Activated CD4-positive, alpha-beta T cell treated with anti-CD3 and anti-CD28 coated beads for 36 hours (primary cell): ENCODE measurements at regions of chr9 and their contacts with region 1.

Region 1: GRCh38 chr9:128455849-128456612 is at the start of gene ODF2:
- DNase-seq: peak; percentile 99
- ATAC-seq: peak; percentile 95
- H3K4me3 Mint-ChIP-seq: peak within 1 kb of the TSS; percentile 81
- H3K27ac Mint-ChIP-seq: peak within 1 kb of the TSS; percentile 82
- H3K4me1 Mint-ChIP-seq: peaks cover 16% of the 10 kb centered on the region
- H3K27me3 Mint-ChIP-seq: no peaks in the 10 kb centered on the region
- total RNA-seq, gene ODF2: 73.5 to 86.4 TPM

Region 2: DNA sequence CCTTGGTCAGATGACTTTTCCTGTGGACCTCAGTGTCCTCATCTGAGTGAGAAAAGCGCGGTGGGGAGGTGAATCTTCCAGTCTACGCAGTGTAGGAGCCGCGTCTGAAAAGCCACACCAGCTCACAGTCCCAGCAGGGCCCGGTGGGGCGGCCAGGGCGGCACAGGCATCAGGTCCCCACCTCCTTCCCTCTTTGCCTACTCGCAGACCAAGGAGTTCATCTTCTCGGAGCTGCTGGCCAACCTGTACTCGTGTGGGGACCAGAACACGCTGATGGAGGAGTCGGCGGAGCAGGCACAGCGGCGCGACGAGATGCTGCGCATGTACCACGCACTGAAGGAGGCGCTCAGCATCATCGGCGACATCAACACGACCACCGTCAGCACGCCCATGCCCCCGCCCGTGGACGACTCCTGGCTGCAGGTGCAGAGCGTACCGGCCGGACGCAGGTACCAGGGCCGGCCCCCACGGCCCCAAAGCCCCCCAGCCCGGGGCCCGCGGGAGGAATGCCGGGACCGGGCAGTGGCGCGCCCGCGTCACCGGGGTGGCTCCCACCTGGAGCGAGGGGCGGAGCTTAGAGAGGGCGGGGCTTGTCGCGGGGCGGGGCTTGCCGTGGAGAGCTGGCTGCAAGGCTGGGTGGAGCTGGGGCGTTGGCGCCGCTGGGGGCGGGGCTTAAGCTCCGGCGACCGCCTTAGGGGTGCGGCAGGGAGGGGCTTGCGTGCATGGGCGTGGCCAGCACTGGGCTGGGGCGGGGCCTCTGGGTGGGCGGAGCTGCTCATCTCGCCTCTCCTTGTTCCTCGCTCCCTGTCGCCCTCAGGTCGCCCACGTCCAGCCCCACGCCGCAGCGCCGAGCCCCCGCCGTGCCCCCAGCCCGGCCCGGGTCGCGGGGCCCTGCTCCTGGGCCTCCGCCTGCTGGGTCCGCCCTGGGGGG is 205.9 kb before region 1 on chr9:
- CTCF ChIA-PET with region 1: no interaction called
- POLR2A ChIA-PET with region 1: no interaction called
- intact Hi-C with region 1: loop called in 1 of 2 experiments (anchors 1 kb)
- DNase-seq: peak; percentile 99
- ATAC-seq: peak; percentile 98
- H3K4me3 Mint-ChIP-seq: peak overlapping the region; percentile 78
- H3K27ac Mint-ChIP-seq: peak overlapping the region; percentile 42
- H3K4me1 Mint-ChIP-seq: peaks cover 7% of the 10 kb centered on the region
- H3K27me3 Mint-ChIP-seq: peaks cover 10% of the 10 kb centered on the region

Region 3: GRCh38 chr9:128370826-128371621 is 85.0 kb before region 1 on chr9 and contains the start of gene URM1:
- CTCF ChIA-PET with region 1: no interaction called
- POLR2A ChIA-PET with region 1: no interaction called
- intact Hi-C with region 1: loop called in 1 of 2 experiments (anchors 1 kb)
- DNase-seq: peak; percentile 98
- ATAC-seq: peak; percentile 98
- H3K4me3 Mint-ChIP-seq: peak within 1 kb of the TSS; percentile 87
- H3K27ac Mint-ChIP-seq: peak within 1 kb of the TSS; percentile 89
- H3K4me1 Mint-ChIP-seq: peaks cover 27% of the 10 kb centered on the region
- H3K27me3 Mint-ChIP-seq: no peaks in the 10 kb centered on the region
- total RNA-seq, gene URM1: 39.9 to 56.1 TPM

Region 4: GRCh38 chr9:128470560-128470959 is 14.5 kb after region 1 on chr9:
- CTCF ChIA-PET with region 1: no interaction called
- POLR2A ChIA-PET with region 1: no interaction called
- intact Hi-C with region 1: no loop called
- DNase-seq: peak; percentile 24
- ATAC-seq: peak; percentile 30
- H3K4me3 Mint-ChIP-seq: no peak overlapping the region
- H3K27ac Mint-ChIP-seq: peak overlapping the region; percentile 32
- H3K4me1 Mint-ChIP-seq: peaks cover 2% of the 10 kb centered on the region
- H3K27me3 Mint-ChIP-seq: no peaks in the 10 kb centered on the region

Region 5: GRCh38 chr9:128688512-128689292 is 232.7 kb after region 1 on chr9 and contains the start of gene SET:
- CTCF ChIA-PET with region 1: no interaction called
- POLR2A ChIA-PET with region 1: interaction called, 3 read pairs
- intact Hi-C with region 1: loop called in 1 of 2 experiments (anchors 1 kb)
- DNase-seq: peak; percentile 96
- ATAC-seq: peak; percentile 71
- H3K4me3 Mint-ChIP-seq: peak within 1 kb of the TSS; percentile 99
- H3K27ac Mint-ChIP-seq: peak within 1 kb of the TSS; percentile 94
- H3K4me1 Mint-ChIP-seq: peaks cover 61% of the 10 kb centered on the region
- H3K27me3 Mint-ChIP-seq: no peaks in the 10 kb centered on the region
- total RNA-seq, gene SET: 673 to 682 TPM

Region 6: DNA sequence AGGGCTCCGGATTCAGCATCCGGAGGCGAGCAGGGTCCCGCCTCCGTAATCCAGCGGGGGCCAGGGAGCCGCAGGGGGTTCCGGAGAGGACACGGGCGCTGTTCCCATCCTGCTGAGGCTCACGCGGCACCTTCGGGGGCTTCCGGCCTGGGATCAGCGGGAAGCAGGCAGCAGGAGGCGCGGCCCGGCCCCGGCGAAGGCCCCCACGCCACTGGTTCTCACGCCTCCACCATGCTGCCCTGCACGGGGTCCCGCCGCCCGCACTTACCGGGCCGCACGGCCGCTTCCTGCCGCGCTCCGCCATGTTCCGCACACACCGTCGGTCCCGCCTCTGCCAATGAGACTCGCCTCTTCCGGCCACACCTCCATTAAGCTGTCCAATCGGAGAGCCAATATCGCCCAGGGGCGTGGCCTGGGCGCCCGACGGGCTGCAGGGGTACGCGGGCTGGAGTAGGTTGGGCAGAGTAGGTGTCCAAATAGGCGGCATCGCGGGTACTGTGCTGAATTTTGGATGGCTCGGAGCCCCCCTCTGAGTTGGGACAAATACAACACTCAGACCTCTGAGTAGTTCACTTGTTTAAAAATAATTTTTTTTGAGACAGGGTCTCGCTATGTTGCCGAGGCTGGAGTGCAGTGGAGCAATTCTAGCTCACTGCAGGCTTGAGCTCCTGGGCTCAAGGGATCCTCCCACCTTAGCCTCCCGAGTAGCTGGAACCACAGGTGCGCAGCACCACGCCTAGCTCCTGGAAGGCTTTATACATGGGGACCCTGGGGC is 373.6 kb after region 1 on chr9 and contains the start of gene SPOUT1:
- CTCF ChIA-PET with region 1: no interaction called
- POLR2A ChIA-PET with region 1: interaction called, 3 read pairs
- intact Hi-C with region 1: loop called in 1 of 2 experiments (anchors 1 kb)
- DNase-seq: peak; percentile 96
- ATAC-seq: peak; percentile 98
- H3K4me3 Mint-ChIP-seq: peak within 1 kb of the TSS; percentile 91
- H3K27ac Mint-ChIP-seq: peak within 1 kb of the TSS; percentile 88
- H3K4me1 Mint-ChIP-seq: peaks cover 23% of the 10 kb centered on the region
- H3K27me3 Mint-ChIP-seq: no peaks in the 10 kb centered on the region
- total RNA-seq, gene SPOUT1: 87.9 to 92.9 TPM

Region 7: DNA sequence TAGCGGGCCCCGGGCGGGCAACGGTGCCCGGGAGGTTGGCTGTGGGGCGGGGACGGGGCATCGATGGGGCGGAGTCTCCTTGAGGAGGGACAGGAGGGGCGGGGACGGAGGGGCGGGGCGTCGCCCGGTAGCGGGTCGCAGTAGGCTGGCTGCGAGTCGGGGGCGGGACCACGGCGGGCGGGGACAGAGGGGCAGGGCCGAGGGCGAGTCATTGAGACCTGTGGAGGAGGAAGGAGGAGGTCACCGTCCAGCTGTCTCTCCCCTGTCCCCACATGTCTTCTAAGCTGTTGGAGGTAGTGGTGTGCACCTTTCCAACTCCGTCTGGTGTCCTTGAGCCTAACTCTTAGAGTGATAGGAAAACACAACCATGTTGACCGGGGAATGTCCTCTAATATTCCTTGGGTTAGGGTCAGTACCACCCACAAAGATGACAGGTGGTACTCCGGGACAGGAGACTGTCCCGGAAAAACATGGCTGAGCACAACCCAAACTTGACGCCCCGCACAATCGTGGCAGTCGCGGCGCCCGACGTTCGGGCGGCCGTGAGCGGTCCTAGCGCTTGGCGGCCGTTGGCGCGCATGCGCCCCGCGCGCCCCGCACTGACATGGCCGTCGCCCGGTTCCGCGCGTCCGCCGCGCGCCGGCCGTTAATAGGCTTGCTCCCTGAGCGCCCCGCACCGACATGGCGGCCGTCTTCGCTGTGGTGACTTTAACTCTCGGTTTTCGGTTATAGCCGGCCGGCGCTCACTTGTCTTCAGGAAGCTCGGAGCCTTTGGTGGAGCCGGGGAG is 654.9 kb after region 1 on chr9 and contains the starts of genes CRAT and PTPA:
- CTCF ChIA-PET with region 1: no interaction called
- POLR2A ChIA-PET with region 1: no interaction called
- intact Hi-C with region 1: loop called in 1 of 2 experiments (anchors 1 kb)
- DNase-seq: peak; percentile 99
- ATAC-seq: peak; percentile 90
- H3K4me3 Mint-ChIP-seq: peak within 1 kb of the TSS; percentile 93
- H3K27ac Mint-ChIP-seq: peak within 1 kb of the TSS; percentile 94
- H3K4me1 Mint-ChIP-seq: peaks cover 38% of the 10 kb centered on the region
- H3K27me3 Mint-ChIP-seq: no peaks in the 10 kb centered on the region
- total RNA-seq, gene CRAT: 13.2 to 18.9 TPM
- total RNA-seq, gene PTPA: 71.9 to 88.0 TPM